Caco-2 (cell line): ENCODE measurements at regions of chr10 and their contacts with region 1.

Region 1: GRCh38 chr10:55746002-55746401 is 615.1 kb downstream of the ZWINT start:
- DNase-seq: no peak
- H3K4me3 ChIP-seq: no peak overlapping the region
- H3K4me3 Mint-ChIP-seq: no peak overlapping the region
- H3K27ac Mint-ChIP-seq: no peak overlapping the region
- H3K4me1 ChIP-seq: no peaks in the 10 kb centered on the region
- H3K4me1 Mint-ChIP-seq: no peaks in the 10 kb centered on the region
- H3K27me3 ChIP-seq: no peaks in the 10 kb centered on the region
- H3K27me3 Mint-ChIP-seq: no peaks in the 10 kb centered on the region
- CTCF ChIP-seq: no peak

Region 2: GRCh38 chr10:55668326-55668922 is 77.6 kb before region 1 on chr10:
- CTCF ChIA-PET with region 1: interaction called, 3 read pairs
- POLR2A ChIA-PET with region 1: no interaction called
- intact Hi-C with region 1: loop called (anchors 1 kb)
- DNase-seq: peak in 1 of 2 experiments; percentile 64
- H3K4me3 ChIP-seq: no peak overlapping the region
- H3K4me3 Mint-ChIP-seq: no peak overlapping the region
- H3K27ac Mint-ChIP-seq: no peak overlapping the region
- H3K4me1 ChIP-seq: no peaks in the 10 kb centered on the region
- H3K4me1 Mint-ChIP-seq: no peaks in the 10 kb centered on the region
- H3K27me3 ChIP-seq: no peaks in the 10 kb centered on the region
- H3K27me3 Mint-ChIP-seq: no peaks in the 10 kb centered on the region
- CTCF ChIP-seq: peak; percentile 57 to 70

Region 3: DNA sequence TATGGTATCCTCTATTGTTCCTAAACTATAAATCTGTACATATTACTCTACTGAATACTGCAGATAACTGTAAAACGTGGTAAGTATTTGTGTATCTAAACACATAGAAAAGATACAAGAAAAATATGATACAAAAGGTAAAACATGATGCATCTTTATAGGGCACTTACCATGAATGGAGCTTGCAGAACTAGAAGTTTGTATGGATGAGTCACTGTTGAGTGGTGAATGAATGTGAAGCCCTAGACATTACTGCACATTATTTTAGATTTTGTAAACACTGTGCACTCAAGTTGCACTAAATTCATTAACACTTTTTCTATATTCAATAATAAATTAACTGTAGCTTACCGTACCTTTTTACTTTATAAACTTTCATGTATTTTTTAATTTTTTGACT is 257.6 kb after region 1 on chr10:
- CTCF ChIA-PET with region 1: no interaction called
- POLR2A ChIA-PET with region 1: no interaction called
- intact Hi-C with region 1: no loop called
- DNase-seq: no peak
- H3K4me3 ChIP-seq: no peak overlapping the region
- H3K4me3 Mint-ChIP-seq: no peak overlapping the region
- H3K27ac Mint-ChIP-seq: no peak overlapping the region
- H3K4me1 ChIP-seq: no peaks in the 10 kb centered on the region
- H3K4me1 Mint-ChIP-seq: no peaks in the 10 kb centered on the region
- H3K27me3 ChIP-seq: no peaks in the 10 kb centered on the region
- H3K27me3 Mint-ChIP-seq: no peaks in the 10 kb centered on the region
- CTCF ChIP-seq: no peak

Region 4: DNA sequence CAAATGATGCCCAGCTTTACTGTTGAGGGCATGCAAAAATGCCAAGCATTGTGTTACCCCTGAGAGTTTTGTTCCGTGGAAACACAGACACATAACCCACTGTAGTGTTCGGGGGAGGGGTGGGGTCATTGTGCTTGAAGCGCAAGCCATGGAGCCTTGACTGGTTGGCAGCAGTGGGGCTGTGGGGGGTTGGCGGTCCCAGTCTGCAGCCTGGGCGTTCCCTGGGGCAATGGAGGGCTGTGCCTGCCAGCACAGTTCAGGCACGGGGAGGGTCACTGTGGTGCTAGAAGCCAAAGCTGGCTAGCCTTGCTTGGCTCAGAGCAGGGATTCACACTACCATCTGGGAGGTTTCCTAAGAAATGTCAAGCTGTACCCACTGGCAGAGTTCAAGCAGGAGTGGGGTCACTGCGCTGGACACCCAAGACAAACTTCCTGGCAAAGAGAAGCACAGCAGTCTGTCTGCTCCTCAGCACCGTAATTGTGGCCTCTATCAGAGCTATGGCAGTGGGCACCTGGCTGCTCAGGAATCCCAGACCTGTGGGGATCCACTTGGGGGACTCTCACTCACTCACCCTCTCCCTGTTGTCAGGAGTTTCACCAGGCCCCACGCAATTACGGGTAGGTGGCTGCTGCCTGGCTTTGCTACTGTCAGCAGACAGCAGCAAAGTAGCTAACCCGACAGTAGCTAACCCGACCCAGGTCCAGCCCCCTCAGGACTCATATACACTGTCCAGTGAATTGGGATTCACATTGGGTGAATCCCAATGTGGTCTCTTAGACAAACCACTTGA is 322.7 kb after region 1 on chr10:
- CTCF ChIA-PET with region 1: no interaction called
- POLR2A ChIA-PET with region 1: no interaction called
- intact Hi-C with region 1: no loop called
- DNase-seq: no peak
- H3K4me3 ChIP-seq: no peak overlapping the region
- H3K4me3 Mint-ChIP-seq: no peak overlapping the region
- H3K27ac Mint-ChIP-seq: no peak overlapping the region
- H3K4me1 ChIP-seq: no peaks in the 10 kb centered on the region
- H3K4me1 Mint-ChIP-seq: no peaks in the 10 kb centered on the region
- H3K27me3 ChIP-seq: no peaks in the 10 kb centered on the region
- H3K27me3 Mint-ChIP-seq: no peaks in the 10 kb centered on the region
- CTCF ChIP-seq: no peak

Region 5: GRCh38 chr10:56116684-56117083 is 370.7 kb after region 1 on chr10:
- CTCF ChIA-PET with region 1: no interaction called
- POLR2A ChIA-PET with region 1: no interaction called
- intact Hi-C with region 1: loop called (anchors 5 kb)
- DNase-seq: peak in 1 of 2 experiments; percentile 23
- H3K4me3 ChIP-seq: no peak overlapping the region
- H3K4me3 Mint-ChIP-seq: no peak overlapping the region
- H3K27ac Mint-ChIP-seq: no peak overlapping the region
- H3K4me1 ChIP-seq: no peaks in the 10 kb centered on the region
- H3K4me1 Mint-ChIP-seq: no peaks in the 10 kb centered on the region
- H3K27me3 ChIP-seq: no peaks in the 10 kb centered on the region
- H3K27me3 Mint-ChIP-seq: peaks cover 4% of the 10 kb centered on the region
- CTCF ChIP-seq: peak; percentile 63 to 64